OCI-LY7 (cell line): ENCODE measurements at regions of chr2 and their contacts with region 1.

Region 1: GRCh38 chr2:199160081-199160480 is 297.7 kb downstream of the SATB2 start:
- DNase-seq: no peak
- H3K4me3 ChIP-seq: no peak overlapping the region
- H3K27ac ChIP-seq: no peak overlapping the region
- H3K4me1 ChIP-seq: peaks cover 24% of the 10 kb centered on the region
- CTCF ChIP-seq: no peak

Region 2: GRCh38 chr2:199128476-199129229 is 31.4 kb before region 1 on chr2:
- CTCF ChIA-PET with region 1: no interaction called
- POLR2A ChIA-PET with region 1: interaction called, 3 read pairs
- intact Hi-C with region 1: loop called (anchors 1 kb)
- DNase-seq: no peak
- H3K4me3 ChIP-seq: no peak overlapping the region
- H3K27ac ChIP-seq: no peak overlapping the region
- H3K4me1 ChIP-seq: peaks cover 11% of the 10 kb centered on the region
- CTCF ChIP-seq: no peak

Region 3: GRCh38 chr2:199309973-199310372 is 149.9 kb after region 1 on chr2:
- CTCF ChIA-PET with region 1: no interaction called
- POLR2A ChIA-PET with region 1: no interaction called
- intact Hi-C with region 1: no loop called
- DNase-seq: peak; percentile 96
- H3K4me3 ChIP-seq: peak overlapping the region; percentile 54
- H3K27ac ChIP-seq: peak overlapping the region; percentile 99
- H3K4me1 ChIP-seq: peaks cover 84% of the 10 kb centered on the region
- CTCF ChIP-seq: no peak

Region 4: GRCh38 chr2:199348871-199349270 is 188.8 kb after region 1 on chr2:
- CTCF ChIA-PET with region 1: no interaction called
- POLR2A ChIA-PET with region 1: no interaction called
- intact Hi-C with region 1: no loop called
- DNase-seq: no peak
- H3K4me3 ChIP-seq: no peak overlapping the region
- H3K27ac ChIP-seq: no peak overlapping the region
- H3K4me1 ChIP-seq: no peaks in the 10 kb centered on the region
- CTCF ChIP-seq: no peak